Mammary epithelial cell (primary cell): ENCODE measurements at regions of chr10 and their contacts with region 1.

Region 1: DNA sequence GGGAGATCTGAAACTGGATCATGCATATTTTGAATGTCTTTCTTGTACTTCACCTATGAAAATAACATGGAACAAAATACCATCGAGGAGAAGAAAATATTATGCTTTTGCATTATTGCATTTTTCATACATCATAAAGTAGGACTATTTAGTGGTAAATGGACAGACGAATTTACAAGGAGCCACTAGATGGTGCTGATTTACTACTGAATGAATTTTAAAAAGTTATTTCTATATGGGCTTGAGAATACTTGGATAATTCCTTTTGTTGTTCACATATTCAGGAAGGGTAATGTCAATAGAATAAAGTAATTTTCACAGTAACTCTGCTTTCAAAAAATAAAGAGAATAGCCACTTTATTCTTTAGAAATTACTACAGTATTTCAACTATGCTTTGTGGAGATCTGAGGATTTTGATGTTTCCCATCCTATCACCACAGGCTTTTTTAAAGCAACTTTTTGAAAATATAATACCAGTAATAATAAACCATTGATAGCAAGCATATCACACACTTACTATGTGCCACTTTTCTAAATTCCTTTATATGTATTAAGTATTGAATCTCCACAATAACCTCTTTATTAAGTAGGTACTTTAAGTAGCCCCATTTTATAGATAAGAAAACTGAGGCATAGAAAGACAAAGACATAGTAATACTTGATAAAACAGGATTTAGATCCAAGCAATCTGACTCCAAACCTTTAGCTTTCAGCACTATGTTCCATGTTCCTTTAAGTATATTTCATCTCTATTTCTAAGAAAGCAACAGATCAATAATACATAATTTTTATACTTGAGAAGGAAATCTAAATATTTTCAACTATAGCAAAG is 38.6 kb downstream of the NEBL start:
- DNase-seq: peak; percentile 25
- H3K4me3 ChIP-seq: no peak overlapping the region
- H3K27ac ChIP-seq: no peak overlapping the region
- H3K4me1 ChIP-seq: no peaks in the 10 kb centered on the region
- H3K27me3 ChIP-seq: no peaks in the 10 kb centered on the region
- CTCF ChIP-seq: peak; percentile 38 to 54

Region 2: GRCh38 chr10:20616918-20617810 is 241.3 kb before region 1 on chr10:
- CTCF ChIA-PET with region 1: no interaction called
- dilution Hi-C with region 1: no loop called
- in situ Hi-C with region 1: no loop called
- intact Hi-C with region 1: no loop called
- DNase-seq: no peak
- H3K4me3 ChIP-seq: no peak overlapping the region
- H3K27ac ChIP-seq: no peak overlapping the region
- H3K4me1 ChIP-seq: peaks cover 3% of the 10 kb centered on the region
- H3K27me3 ChIP-seq: no peaks in the 10 kb centered on the region
- CTCF ChIP-seq: no peak

Region 3: DNA sequence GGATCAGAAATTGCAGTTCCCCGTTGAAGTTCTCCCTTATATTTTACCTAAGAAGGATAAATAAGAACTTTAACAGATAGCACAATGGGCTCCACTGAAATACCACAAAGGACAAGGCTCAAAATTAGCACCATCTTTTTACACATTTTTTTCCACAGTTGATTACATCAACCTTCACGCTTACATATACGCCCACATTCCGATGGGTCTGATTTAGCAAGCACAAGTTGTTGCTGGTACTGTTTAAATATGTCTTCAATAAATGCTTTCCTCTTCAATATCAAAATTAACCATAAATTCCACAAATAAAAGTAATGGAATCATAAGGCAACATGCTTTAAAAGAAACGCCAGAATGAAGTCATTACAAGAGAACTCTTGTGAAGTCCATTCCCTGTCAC is 40.9 kb before region 1 on chr10:
- CTCF ChIA-PET with region 1: no interaction called
- dilution Hi-C with region 1: no loop called
- in situ Hi-C with region 1: no loop called
- intact Hi-C with region 1: no loop called
- DNase-seq: peak; percentile 24
- H3K4me3 ChIP-seq: no peak overlapping the region
- H3K27ac ChIP-seq: no peak overlapping the region
- H3K4me1 ChIP-seq: no peaks in the 10 kb centered on the region
- H3K27me3 ChIP-seq: no peaks in the 10 kb centered on the region
- CTCF ChIP-seq: no peak

Region 4: GRCh38 chr10:20871970-20872369 is 13.5 kb after region 1 on chr10:
- CTCF ChIA-PET with region 1: no interaction called
- dilution Hi-C with region 1: no loop called
- in situ Hi-C with region 1: no loop called
- intact Hi-C with region 1: no loop called
- DNase-seq: no peak
- H3K4me3 ChIP-seq: no peak overlapping the region
- H3K27ac ChIP-seq: no peak overlapping the region
- H3K4me1 ChIP-seq: no peaks in the 10 kb centered on the region
- H3K27me3 ChIP-seq: no peaks in the 10 kb centered on the region
- CTCF ChIP-seq: no peak

Region 5: GRCh38 chr10:21020545-21020944 is 162.0 kb after region 1 on chr10:
- CTCF ChIA-PET with region 1: no interaction called
- dilution Hi-C with region 1: no loop called
- in situ Hi-C with region 1: no loop called
- intact Hi-C with region 1: loop called (anchors 1 kb)
- DNase-seq: peak; percentile 9
- H3K4me3 ChIP-seq: no peak overlapping the region
- H3K27ac ChIP-seq: no peak overlapping the region
- H3K4me1 ChIP-seq: peaks cover 2% of the 10 kb centered on the region
- H3K27me3 ChIP-seq: no peaks in the 10 kb centered on the region
- CTCF ChIP-seq: peak; percentile 34 to 36

Region 6: DNA sequence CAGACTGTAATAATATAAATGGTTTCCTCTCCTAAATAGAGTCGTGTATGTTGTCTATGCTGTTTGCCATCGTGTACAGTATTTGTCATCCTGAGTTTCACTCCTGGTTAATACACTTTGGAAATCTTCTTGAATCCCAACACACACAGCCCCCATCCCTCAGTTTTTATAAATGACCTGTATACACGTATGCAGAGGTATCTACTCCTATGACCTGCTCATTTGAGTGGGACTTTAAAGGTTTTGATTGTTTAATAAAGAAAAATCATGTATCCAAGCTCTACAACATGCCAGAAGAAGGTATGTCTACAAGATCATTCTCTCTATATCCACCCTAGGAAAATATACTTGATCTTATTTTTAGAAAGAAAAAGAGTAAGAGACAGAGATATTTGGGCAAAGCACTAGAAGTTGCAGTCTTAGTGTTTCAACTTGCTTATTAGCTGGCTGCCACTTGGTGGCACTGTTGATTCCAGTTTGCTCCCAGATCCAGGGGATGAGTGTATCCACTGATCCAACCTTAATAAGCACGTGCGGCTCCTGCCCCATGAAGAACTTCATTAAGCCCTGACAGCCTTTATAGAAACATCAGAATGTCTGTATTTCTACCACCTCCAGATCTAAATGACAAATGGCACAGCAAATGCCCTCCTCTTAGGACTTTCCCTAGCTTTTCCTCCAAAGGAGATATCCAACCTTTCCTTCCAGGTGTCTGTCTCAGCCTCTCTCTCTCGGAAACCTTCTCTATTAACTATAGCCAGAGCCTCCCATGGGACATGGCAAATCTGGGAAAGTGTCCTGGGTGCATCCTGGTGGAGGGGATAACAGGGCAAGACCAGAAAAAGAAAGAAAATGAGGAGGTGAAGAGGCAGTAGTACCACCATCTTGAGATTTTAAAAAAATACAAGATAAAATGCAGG is 220.2 kb after region 1 on chr10:
- CTCF ChIA-PET with region 1: no interaction called
- dilution Hi-C with region 1: no loop called
- in situ Hi-C with region 1: no loop called
- intact Hi-C with region 1: loop called (anchors 2 kb)
- DNase-seq: peak; percentile 52
- H3K4me3 ChIP-seq: no peak overlapping the region
- H3K27ac ChIP-seq: no peak overlapping the region
- H3K4me1 ChIP-seq: no peaks in the 10 kb centered on the region
- H3K27me3 ChIP-seq: no peaks in the 10 kb centered on the region
- CTCF ChIP-seq: peak; percentile 81 to 82

Region 7: DNA sequence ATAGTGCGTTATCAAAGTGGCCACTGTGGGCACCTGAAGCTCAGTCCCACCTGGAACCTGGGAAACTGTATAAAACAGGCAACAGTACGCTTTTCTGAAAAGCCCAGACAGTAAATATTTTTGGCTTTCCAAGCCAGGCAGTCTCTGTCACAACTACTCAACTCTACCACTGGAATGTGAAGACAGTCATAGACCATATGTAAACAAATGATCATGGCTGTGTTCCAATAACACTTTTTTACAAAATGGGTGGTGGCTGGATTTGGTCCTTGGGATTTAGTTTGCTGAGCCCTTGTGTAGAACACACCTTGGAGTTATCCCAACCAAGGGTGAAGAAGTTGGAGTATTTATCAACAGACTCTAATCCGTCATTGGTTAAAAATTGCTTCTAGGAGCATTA is 407.1 kb after region 1 on chr10:
- CTCF ChIA-PET with region 1: no interaction called
- dilution Hi-C with region 1: no loop called
- in situ Hi-C with region 1: loop called (anchors 10 kb)
- intact Hi-C with region 1: loop called (anchors 1 kb)
- DNase-seq: peak; percentile 83
- H3K4me3 ChIP-seq: no peak overlapping the region
- H3K27ac ChIP-seq: peak overlapping the region; percentile 6
- H3K4me1 ChIP-seq: peaks cover 19% of the 10 kb centered on the region
- H3K27me3 ChIP-seq: no peaks in the 10 kb centered on the region
- CTCF ChIP-seq: no peak

Region 8: GRCh38 chr10:21273400-21273932 is 415.0 kb after region 1 on chr10:
- CTCF ChIA-PET with region 1: no interaction called
- dilution Hi-C with region 1: no loop called
- in situ Hi-C with region 1: loop called (anchors 10 kb)
- intact Hi-C with region 1: loop called (anchors 1 kb)
- DNase-seq: no peak
- H3K4me3 ChIP-seq: no peak overlapping the region
- H3K27ac ChIP-seq: no peak overlapping the region
- H3K4me1 ChIP-seq: no peaks in the 10 kb centered on the region
- H3K27me3 ChIP-seq: no peaks in the 10 kb centered on the region
- CTCF ChIP-seq: no peak